SK-N-SH (cell line): ENCODE measurements at regions of chr7 and their contacts with region 1.

Region 1: GRCh38 chr7:91034459-91035368 is 229.5 kb upstream of the FZD1 start:
- DNase-seq: peak; percentile 76
- H3K4me3 ChIP-seq: no peak overlapping the region; a peak in 1 of 4 replicates
- H3K27ac ChIP-seq: peak overlapping the region; percentile 5 to 17; a peak in 2 of 4 replicates
- H3K4me1 ChIP-seq: peaks cover 0 to 6% of the 10 kb centered on the region in 2 experiments; a peak in 2 of 4 replicates
- H3K27me3 ChIP-seq: no peaks in the 10 kb centered on the region
- CTCF ChIP-seq: peak; percentile 96
- EP300 ChIP-seq: peak in 1 of 2 experiments; percentile 54; a peak in 2 of 4 replicates
- RAD21 ChIP-seq: peak; percentile 96

Region 2: DNA sequence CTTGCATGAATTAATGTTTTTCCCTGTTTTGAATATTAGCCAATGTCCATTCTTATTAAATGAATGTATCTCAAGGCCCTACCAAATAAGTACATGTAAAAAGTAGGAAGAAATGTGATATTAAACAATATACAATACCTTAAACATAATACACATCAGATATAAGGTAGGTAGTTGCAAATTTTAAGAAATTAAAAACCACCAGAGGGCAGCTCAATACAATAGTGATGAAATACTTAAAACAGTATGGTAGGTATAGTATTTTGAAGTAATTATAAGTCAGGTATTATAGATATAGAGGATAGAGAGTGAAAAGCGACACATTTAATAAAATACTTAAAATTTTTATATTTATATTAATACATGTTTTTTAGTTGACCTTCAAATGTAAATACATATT is 482.2 kb before region 1 on chr7:
- CTCF ChIA-PET with region 1: interaction called, 18 read pairs
- POLR2A ChIA-PET with region 1: no interaction called
- DNase-seq: no peak
- H3K4me3 ChIP-seq: no peak overlapping the region
- H3K27ac ChIP-seq: no peak overlapping the region
- H3K4me1 ChIP-seq: no peaks in the 10 kb centered on the region
- H3K27me3 ChIP-seq: no peaks in the 10 kb centered on the region
- CTCF ChIP-seq: peak; percentile 60
- EP300 ChIP-seq: no peak
- RAD21 ChIP-seq: peak; percentile 59

Region 3: DNA sequence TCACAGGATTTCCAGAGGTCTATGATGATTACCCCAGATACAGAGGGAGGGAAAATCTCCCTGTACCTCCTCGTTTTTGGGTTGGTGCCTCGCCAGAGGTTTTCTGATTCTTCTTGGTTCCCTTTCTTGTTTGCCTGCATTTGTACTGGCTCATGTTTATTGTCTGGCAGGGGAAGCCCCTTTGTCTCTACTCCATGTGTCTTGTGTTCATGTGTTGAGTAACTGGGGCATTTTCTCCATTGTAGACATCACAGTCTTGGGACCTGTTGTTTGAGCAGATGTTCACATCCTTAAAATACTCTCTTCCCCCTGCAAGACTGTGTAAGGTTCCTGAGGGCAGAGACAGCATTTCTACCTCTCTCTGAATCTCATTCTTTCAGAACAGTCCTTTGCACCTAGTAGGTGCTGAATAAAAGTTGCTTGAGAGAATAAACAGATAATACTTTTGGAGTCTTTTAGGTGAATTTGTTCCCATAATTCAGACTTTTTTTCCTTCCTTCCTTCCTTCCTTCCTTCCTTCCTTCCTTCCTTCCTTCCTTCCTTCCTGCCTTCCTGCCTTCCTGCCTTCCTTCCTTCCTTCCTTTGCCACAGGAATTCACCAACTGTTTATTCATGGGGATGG is 413.5 kb before region 1 on chr7:
- CTCF ChIA-PET with region 1: interaction called, 12 read pairs
- POLR2A ChIA-PET with region 1: no interaction called
- DNase-seq: no peak
- H3K4me3 ChIP-seq: no peak overlapping the region
- H3K27ac ChIP-seq: no peak overlapping the region
- H3K4me1 ChIP-seq: peaks cover 12 to 55% of the 10 kb centered on the region in 2 experiments
- H3K27me3 ChIP-seq: no peaks in the 10 kb centered on the region
- CTCF ChIP-seq: no peak
- EP300 ChIP-seq: no peak
- RAD21 ChIP-seq: no peak

Region 4: GRCh38 chr7:90708841-90709317 is 325.8 kb before region 1 on chr7:
- CTCF ChIA-PET with region 1: interaction called, 10 read pairs
- POLR2A ChIA-PET with region 1: no interaction called
- DNase-seq: no peak
- H3K4me3 ChIP-seq: peak overlapping the region in 1 of 2 experiments; percentile 20; a peak in 1 of 4 replicates
- H3K27ac ChIP-seq: no peak overlapping the region
- H3K4me1 ChIP-seq: peaks cover 9 to 34% of the 10 kb centered on the region in 2 experiments
- H3K27me3 ChIP-seq: no peaks in the 10 kb centered on the region
- CTCF ChIP-seq: peak; percentile 75
- EP300 ChIP-seq: no peak
- RAD21 ChIP-seq: peak; percentile 62

Region 5: GRCh38 chr7:91013078-91013477 is 21.6 kb before region 1 on chr7:
- CTCF ChIA-PET with region 1: interaction called, 21 read pairs
- POLR2A ChIA-PET with region 1: no interaction called
- DNase-seq: no peak
- H3K4me3 ChIP-seq: no peak overlapping the region
- H3K27ac ChIP-seq: no peak overlapping the region
- H3K4me1 ChIP-seq: no peaks in the 10 kb centered on the region
- H3K27me3 ChIP-seq: no peaks in the 10 kb centered on the region
- CTCF ChIP-seq: no peak
- EP300 ChIP-seq: no peak
- RAD21 ChIP-seq: no peak

Region 6: DNA sequence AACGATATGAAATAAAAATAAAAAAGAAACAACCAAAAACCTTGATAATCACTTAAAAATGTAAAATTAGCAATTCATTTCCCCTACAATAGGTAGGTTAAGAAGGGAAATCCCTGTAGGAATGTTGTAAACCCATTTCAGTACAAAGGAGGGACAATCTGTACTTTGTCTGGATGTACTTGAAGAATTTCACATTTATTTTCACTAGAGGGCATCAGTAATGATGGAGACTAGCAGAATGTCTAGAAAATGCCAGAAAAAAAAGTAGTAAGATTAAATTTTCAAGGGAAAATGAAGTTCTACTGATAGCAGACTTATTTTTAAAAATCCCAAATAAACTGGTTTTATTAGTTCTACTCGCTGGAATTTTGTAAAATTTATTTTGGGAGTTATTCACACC is 20.5 kb after region 1 on chr7:
- CTCF ChIA-PET with region 1: interaction called, 10 read pairs
- POLR2A ChIA-PET with region 1: no interaction called
- DNase-seq: no peak
- H3K4me3 ChIP-seq: no peak overlapping the region
- H3K27ac ChIP-seq: no peak overlapping the region
- H3K4me1 ChIP-seq: peaks cover 0 to 4% of the 10 kb centered on the region in 2 experiments; a peak in 2 of 4 replicates
- H3K27me3 ChIP-seq: no peaks in the 10 kb centered on the region
- CTCF ChIP-seq: peak; percentile 37
- EP300 ChIP-seq: no peak
- RAD21 ChIP-seq: peak; percentile 15; the same call in 1 of the 2 replicates

Region 7: GRCh38 chr7:91165006-91165845 is 130.5 kb after region 1 on chr7:
- CTCF ChIA-PET with region 1: no interaction called
- POLR2A ChIA-PET with region 1: no interaction called
- DNase-seq: no peak
- H3K4me3 ChIP-seq: no peak overlapping the region
- H3K27ac ChIP-seq: peak overlapping the region; percentile 34 to 61
- H3K4me1 ChIP-seq: peaks cover 18 to 27% of the 10 kb centered on the region in 2 experiments
- H3K27me3 ChIP-seq: no peaks in the 10 kb centered on the region
- CTCF ChIP-seq: no peak
- EP300 ChIP-seq: peak; percentile 14 to 80; a peak in 1 of 4 replicates
- RAD21 ChIP-seq: no peak

Region 8: DNA sequence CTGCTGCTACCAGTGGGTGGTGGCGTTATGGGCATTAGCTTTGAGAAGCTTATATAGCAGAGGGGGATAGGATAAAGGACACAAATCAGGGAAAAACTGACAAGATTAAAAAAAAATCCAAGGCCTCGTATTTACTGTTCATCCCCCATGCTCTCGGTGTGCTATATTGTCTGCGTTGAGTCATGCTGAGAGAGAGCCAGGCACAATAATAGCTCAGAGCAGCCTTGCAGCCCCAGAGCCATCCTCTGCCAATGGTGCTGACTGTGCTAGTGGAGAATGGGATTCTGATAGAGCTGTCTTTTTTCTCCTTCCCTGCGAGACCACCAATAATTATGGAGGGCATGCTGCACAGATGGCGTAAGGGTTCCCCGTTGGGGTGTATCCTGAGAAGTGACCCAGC is 177.9 kb after region 1 on chr7:
- CTCF ChIA-PET with region 1: no interaction called
- POLR2A ChIA-PET with region 1: no interaction called
- DNase-seq: no peak
- H3K4me3 ChIP-seq: no peak overlapping the region
- H3K27ac ChIP-seq: no peak overlapping the region
- H3K4me1 ChIP-seq: no peaks in the 10 kb centered on the region; a peak in 1 of 4 replicates
- H3K27me3 ChIP-seq: no peaks in the 10 kb centered on the region
- CTCF ChIP-seq: no peak
- EP300 ChIP-seq: no peak
- RAD21 ChIP-seq: no peak